ENCODE measurements at regions of chr10 and their contacts with region 1.

Region 1: GRCh38 chr10:119750391-119751230 is 24.8 kb downstream of the INPP5F start:
- DNase-seq: peak; percentile 62
- CTCF ChIP-seq: peak; percentile 82

Region 2: DNA sequence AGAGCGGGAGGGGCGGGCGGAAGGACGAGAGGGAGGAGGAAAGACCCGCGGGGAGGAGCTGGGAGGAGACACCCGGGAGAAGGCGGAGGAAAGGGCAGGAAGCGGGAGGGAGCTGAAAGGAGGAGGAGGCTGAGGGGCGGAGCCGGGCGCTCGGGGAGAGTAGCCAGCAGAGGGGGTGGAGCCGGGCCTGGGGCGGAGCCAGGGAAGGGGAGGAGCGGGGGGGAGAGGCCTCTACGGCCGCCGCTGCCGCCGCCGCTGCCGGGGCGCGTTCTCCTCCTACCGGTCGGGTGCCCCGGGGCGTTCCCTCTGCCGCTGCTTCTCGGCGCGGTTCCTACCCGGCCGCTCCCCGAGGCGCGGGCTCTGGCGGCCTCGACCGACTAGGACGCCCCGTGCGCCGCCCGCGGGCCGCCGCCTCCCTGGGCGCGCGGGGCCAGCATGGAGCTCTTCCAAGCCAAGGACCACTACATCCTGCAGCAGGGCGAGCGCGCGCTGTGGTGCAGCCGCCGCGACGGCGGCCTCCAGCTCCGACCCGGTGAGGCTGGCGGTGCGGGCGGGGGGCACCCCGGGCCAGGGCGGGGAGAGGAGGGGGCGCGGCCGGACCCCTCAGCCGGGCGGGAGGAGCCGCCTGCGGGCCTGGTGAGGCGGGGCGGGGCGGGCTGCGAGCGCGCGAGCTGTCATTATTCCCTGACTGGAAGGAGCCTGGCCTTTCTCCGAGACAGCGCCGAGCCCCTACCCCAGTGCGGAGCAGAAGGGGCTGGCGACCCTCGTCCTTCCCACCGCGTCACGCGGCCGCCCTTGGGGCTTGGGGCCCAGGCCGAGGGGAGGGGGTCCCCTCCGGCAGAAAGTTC is 24.6 kb before region 1 on chr10 and contains the start of gene INPP5F:
- CTCF ChIA-PET with region 1: interaction called, 24 read pairs
- POLR2A ChIA-PET with region 1: interaction called, 4 read pairs
- DNase-seq: peak; percentile 100
- CTCF ChIP-seq: peak; percentile 27

Region 3: GRCh38 chr10:119761106-119761505 is 10.5 kb after region 1 on chr10:
- CTCF ChIA-PET with region 1: interaction called, 37 read pairs
- POLR2A ChIA-PET with region 1: no interaction called
- DNase-seq: no peak
- CTCF ChIP-seq: no peak

Region 4: GRCh38 chr10:119812684-119813083 is 62.1 kb after region 1 on chr10:
- CTCF ChIA-PET with region 1: interaction called, 22 read pairs
- POLR2A ChIA-PET with region 1: no interaction called
- DNase-seq: no peak
- CTCF ChIP-seq: no peak

Region 5: GRCh38 chr10:119872860-119873681 is 122.5 kb after region 1 on chr10:
- CTCF ChIA-PET with region 1: interaction called, 10 read pairs
- POLR2A ChIA-PET with region 1: no interaction called
- DNase-seq: peak; percentile 91
- CTCF ChIP-seq: no peak

Region 6: DNA sequence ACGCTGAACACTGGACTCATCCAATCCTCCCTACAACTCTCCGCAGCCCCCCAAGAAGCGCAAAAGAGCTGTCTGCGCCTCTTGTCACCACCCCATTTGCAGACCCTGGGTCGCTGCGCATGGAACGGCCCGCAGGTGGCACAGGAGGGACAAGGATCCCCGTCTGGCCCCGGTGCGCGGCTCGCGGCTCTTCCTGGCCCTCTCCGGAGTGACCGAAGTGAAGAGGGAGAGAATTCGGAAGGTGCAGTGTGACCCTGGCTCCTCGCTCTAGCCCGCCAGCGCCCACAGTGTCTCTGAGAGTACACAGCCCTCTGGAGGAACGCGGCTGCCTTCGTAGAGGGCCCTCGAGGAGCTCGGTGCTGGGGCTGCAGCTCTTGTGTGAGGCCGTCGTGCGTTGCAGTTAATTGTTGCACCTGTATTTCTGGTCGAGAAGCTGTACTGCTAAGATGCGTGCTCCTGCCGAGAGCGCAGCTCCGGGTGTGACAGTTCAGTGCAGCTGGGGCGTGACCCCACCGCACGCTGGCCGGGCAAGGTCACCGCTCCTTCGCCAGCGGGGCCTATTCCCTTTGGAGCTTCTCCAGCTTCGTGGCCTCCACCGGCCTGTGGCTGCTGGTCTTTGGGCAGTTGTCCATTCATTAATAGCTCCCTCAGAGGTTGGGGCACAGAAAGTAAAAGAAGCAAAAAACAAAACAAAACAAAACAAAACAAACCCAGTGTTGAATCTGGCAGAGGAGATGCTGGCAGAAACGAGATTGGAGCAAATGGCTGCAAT is 260.9 kb after region 1 on chr10:
- CTCF ChIA-PET with region 1: no interaction called
- POLR2A ChIA-PET with region 1: no interaction called
- DNase-seq: no peak
- CTCF ChIP-seq: no peak

Measured in GM10248 (cell line).